ENCODE measurements at regions of chr19 and their contacts with region 1.

Region 1: DNA sequence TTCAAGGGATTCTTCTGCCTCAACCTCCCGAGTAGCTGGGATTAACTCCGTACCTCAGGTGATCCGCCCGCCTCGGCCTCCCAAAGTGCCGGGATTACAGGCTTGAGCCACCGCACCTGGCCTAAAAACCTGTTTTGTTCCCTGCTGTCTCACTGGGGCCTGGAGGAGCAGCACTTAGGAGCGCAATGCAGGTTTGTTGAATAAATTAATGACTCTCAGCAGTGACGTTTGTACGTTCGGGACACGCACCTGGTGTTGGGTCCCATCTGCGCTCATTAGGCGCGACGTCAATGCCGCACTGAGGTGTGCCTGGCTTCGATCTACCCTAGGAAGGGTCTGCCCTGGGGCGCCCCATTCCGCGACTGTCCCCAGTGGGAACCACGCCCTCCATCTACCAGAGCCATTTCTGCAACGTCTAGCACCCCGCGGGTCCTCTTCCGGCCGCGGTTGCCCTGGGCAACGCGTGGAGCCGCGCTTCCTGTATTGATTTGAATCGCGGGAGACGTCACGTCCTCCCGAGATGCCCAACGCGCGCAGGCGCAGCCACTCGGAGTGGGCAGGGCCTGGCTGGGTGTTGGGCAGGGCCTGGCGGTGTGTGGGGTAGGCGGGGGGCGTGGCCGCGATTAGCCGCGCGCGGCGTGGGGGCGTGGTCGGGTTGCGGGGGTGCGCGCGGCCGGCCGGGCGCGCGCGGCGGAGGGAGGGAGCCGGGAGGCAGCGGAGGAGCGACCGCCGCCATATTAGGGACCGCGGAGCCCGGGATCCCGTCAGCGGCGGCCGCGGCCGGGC is at the start of gene FZR1:
- DNase-seq: peak; percentile 98 to 100 (median 100)
- ATAC-seq: peak; percentile 96
- H3K4me3 ChIP-seq: peak within 1 kb of the TSS; percentile 97
- H3K4me3 Mint-ChIP-seq: peak within 1 kb of the TSS; percentile 88 to 98 (median 92)
- H3K27ac ChIP-seq: peak within 1 kb of the TSS; percentile 95
- H3K27ac Mint-ChIP-seq: peak within 1 kb of the TSS; percentile 91 to 98 (median 96)
- H3K4me1 ChIP-seq: peaks cover 14 to 23% of the 10 kb centered on the region in 2 donors
- H3K4me1 Mint-ChIP-seq: peaks cover 29 to 57% (median 44%) of the 10 kb centered on the region in 7 donors
- H3K27me3 ChIP-seq: no peaks in the 10 kb centered on the region
- H3K27me3 Mint-ChIP-seq: peaks cover 0 to 3% (median 0%) of the 10 kb centered on the region in 5 donors
- total RNA-seq, gene FZR1: 60.7 to 90.7 (median 71.3) TPM

Region 2: DNA sequence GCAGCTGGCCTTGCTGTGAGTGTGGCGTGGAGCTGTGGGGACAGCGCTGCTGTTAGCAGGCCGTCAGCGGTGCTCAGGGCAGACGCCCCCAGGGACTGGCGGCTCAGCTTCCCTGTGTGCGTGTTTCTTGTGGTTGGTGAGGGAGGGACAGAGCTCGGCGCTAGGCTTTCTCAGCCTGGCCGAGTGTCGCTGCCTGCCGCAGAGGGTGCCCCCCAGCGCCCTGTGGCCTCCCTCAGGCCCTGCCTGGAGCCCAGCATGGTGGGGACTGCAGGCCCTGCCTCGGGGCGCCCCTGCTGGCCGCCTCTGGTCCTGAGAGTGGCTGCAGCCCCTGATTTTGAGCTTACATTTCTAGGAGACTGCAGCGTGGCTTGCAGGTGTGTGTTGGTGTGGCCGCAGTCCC is 1306.6 kb before region 1 on chr19:
- CTCF ChIA-PET with region 1: no interaction called
- POLR2A ChIA-PET with region 1: no interaction called
- intact Hi-C with region 1: no loop called
- DNase-seq: no peak
- ATAC-seq: no peak
- H3K4me3 ChIP-seq: no peak overlapping the region
- H3K4me3 Mint-ChIP-seq: no peak overlapping the region
- H3K27ac ChIP-seq: no peak overlapping the region
- H3K27ac Mint-ChIP-seq: peak overlapping the region in 2 of 9 donors; percentile 19 to 48
- H3K4me1 ChIP-seq: no peaks in the 10 kb centered on the region
- H3K4me1 Mint-ChIP-seq: peaks cover 0 to 15% (median 4%) of the 10 kb centered on the region in 7 donors
- H3K27me3 ChIP-seq: no peaks in the 10 kb centered on the region
- H3K27me3 Mint-ChIP-seq: no peaks in the 10 kb centered on the region

Region 3: DNA sequence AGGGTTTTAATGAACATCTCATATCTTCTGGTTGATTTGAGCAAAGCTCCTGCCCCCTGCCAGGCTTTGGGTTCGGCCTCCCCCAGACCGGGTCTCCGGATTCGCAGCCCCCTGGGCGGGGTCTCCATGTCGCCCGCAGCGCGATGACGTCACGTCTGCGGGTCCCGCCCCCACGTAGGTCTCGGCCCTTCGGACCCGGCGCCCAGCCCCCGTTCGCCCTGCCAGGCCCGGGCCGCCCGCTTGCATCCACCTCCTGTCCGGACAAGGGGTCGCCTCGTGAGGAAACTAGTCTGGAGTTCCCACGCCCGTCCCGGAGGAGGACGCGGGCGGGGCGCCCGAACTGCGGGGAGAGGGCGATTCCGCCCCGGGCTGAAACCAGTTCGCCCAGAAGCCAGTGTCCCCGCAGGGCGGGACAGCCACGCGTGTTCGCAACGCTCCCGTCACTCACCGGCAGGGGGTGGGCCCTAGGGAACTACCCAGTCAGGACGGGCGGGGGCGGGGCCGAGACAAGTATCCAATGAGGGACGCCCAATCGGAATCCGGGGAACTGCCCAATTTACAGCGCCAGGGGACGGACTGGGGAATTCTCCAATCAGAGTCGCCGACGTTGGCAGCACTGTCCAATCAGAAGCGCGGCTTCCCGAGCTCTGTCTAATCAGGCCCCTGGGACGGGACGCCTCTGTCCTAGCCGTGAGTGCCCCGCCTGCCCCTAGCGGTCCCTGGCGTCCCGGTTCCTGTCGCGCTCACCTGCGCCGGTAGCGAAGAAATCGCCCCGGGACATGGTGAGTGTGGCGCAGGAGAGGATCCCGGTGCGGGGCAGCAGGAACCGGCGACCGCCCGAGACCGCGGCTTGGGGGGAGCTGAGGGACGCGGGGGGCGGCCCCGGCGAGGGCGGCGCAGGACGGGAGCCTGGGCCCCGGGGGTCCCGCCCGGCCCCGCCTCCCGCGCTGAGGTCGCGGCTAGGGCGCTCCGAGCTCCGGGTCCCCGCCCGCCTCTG is 664.7 kb before region 1 on chr19 and contains the start of gene ZNF555:
- CTCF ChIA-PET with region 1: no interaction called
- POLR2A ChIA-PET with region 1: no interaction called
- intact Hi-C with region 1: loop called in 1 of 2 experiments (anchors 1 kb)
- DNase-seq: peak; percentile 77 to 99 (median 97)
- ATAC-seq: peak; percentile 98
- H3K4me3 ChIP-seq: peak within 1 kb of the TSS; percentile 94
- H3K4me3 Mint-ChIP-seq: peak within 1 kb of the TSS; percentile 85 to 96 (median 92)
- H3K27ac ChIP-seq: peak within 1 kb of the TSS; percentile 75
- H3K27ac Mint-ChIP-seq: peak within 1 kb of the TSS; percentile 70 to 90 (median 82)
- H3K4me1 ChIP-seq: peaks cover 3 to 13% of the 10 kb centered on the region in 2 donors
- H3K4me1 Mint-ChIP-seq: peaks cover 5 to 33% (median 18%) of the 10 kb centered on the region in 7 donors
- H3K27me3 ChIP-seq: no peaks in the 10 kb centered on the region
- H3K27me3 Mint-ChIP-seq: peaks cover 0 to 7% (median 0%) of the 10 kb centered on the region in 5 donors
- total RNA-seq, gene ZNF555: 1.2 to 10.0 (median 2.7) TPM

Region 4: DNA sequence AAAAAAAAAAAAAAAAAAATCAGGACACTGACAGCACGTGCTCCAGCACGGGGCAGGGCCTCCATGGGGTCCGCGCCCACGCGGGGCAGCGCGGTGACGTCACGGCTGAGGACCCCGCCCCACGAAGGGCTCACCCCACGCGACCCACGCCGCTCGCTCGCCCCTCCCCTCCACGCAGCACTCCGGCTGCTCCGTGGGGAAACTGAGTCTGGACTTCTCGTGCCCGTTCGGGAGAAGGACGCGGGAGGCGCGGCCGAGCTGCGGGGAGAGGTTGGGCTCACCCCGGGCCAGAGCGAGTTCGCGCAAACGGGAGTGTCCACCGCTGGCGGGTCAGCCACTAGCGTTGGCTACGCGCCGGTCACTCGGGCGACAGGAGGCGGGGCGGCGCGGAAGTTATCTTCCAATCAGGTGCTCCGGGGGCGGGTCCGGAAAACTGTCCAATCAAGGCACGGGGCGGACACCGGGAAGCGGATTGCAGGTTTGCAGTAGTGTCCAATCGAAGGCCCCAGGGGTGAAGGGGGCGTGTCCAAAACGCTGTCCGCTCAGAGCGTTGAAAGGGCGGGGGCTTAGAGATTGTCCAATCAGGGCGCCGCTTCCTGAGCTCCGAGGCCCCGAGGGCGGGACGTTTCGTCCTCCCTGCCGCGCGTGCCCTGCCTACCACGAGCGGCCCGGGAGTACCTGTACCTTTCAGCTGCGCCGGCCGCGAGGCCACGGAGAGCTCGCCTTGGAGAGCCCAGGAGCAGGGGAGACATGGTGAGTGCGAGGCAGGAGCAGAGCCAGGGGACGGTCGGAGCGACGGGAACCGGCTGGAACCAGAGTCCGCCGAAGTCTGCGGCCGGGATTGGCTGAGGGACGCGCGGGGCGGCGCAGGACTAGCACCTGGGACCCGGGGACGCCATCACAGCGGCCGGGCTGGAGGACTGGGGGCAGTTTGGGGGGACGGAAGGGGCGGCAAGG is 605.2 kb before region 1 on chr19 and contains the start of gene ZNF57:
- CTCF ChIA-PET with region 1: no interaction called
- POLR2A ChIA-PET with region 1: no interaction called
- intact Hi-C with region 1: no loop called
- DNase-seq: peak; percentile 83 to 98 (median 96)
- ATAC-seq: peak; percentile 99
- H3K4me3 ChIP-seq: peak within 1 kb of the TSS; percentile 79
- H3K4me3 Mint-ChIP-seq: peak within 1 kb of the TSS; percentile 88 to 99 (median 96)
- H3K27ac ChIP-seq: peak within 1 kb of the TSS; percentile 63
- H3K27ac Mint-ChIP-seq: peak within 1 kb of the TSS; percentile 55 to 91 (median 85)
- H3K4me1 ChIP-seq: peaks cover 0 to 4% of the 10 kb centered on the region in 2 donors
- H3K4me1 Mint-ChIP-seq: peaks cover 11 to 28% (median 21%) of the 10 kb centered on the region in 7 donors
- H3K27me3 ChIP-seq: no peaks in the 10 kb centered on the region
- H3K27me3 Mint-ChIP-seq: no peaks in the 10 kb centered on the region
- total RNA-seq, gene ZNF57: 1.7 to 5.0 (median 2.2) TPM

Region 5: GRCh38 chr19:3035542-3036118 is 470.2 kb before region 1 on chr19:
- CTCF ChIA-PET with region 1: no interaction called
- POLR2A ChIA-PET with region 1: no interaction called
- intact Hi-C with region 1: loop called in 1 of 2 experiments (anchors 1 kb)
- DNase-seq: peak; percentile 77 to 97 (median 95)
- ATAC-seq: peak; percentile 95
- H3K4me3 ChIP-seq: peak overlapping the region; percentile 95
- H3K4me3 Mint-ChIP-seq: peak overlapping the region; percentile 88 to 97 (median 94)
- H3K27ac ChIP-seq: peak overlapping the region; percentile 76
- H3K27ac Mint-ChIP-seq: peak overlapping the region; percentile 92 to 99 (median 98)
- H3K4me1 ChIP-seq: peaks cover 11 to 16% of the 10 kb centered on the region in 2 donors
- H3K4me1 Mint-ChIP-seq: peaks cover 21 to 44% (median 31%) of the 10 kb centered on the region in 7 donors
- H3K27me3 ChIP-seq: no peaks in the 10 kb centered on the region
- H3K27me3 Mint-ChIP-seq: peaks cover 0 to 41% (median 0%) of the 10 kb centered on the region in 5 donors

Region 6: GRCh38 chr19:3360421-3361383 is 145.1 kb before region 1 on chr19:
- CTCF ChIA-PET with region 1: no interaction called
- POLR2A ChIA-PET with region 1: no interaction called
- intact Hi-C with region 1: loop called in 1 of 2 experiments (anchors 1 kb)
- DNase-seq: peak; percentile 60 to 80 (median 71)
- ATAC-seq: peak; percentile 70
- H3K4me3 ChIP-seq: peak overlapping the region; percentile 62
- H3K4me3 Mint-ChIP-seq: peak overlapping the region; percentile 85 to 97 (median 90)
- H3K27ac ChIP-seq: peak overlapping the region; percentile 69
- H3K27ac Mint-ChIP-seq: peak overlapping the region; percentile 54 to 91 (median 84)
- H3K4me1 ChIP-seq: peaks cover 16 to 18% of the 10 kb centered on the region in 2 donors
- H3K4me1 Mint-ChIP-seq: peaks cover 25 to 49% (median 41%) of the 10 kb centered on the region in 7 donors
- H3K27me3 ChIP-seq: no peaks in the 10 kb centered on the region
- H3K27me3 Mint-ChIP-seq: peaks cover 0 to 67% (median 0%) of the 10 kb centered on the region in 5 donors

Region 7: GRCh38 chr19:3387645-3388589 is 117.9 kb before region 1 on chr19:
- CTCF ChIA-PET with region 1: no interaction called
- POLR2A ChIA-PET with region 1: no interaction called
- intact Hi-C with region 1: no loop called
- DNase-seq: no peak
- ATAC-seq: no peak
- H3K4me3 ChIP-seq: no peak overlapping the region
- H3K4me3 Mint-ChIP-seq: no peak overlapping the region
- H3K27ac ChIP-seq: no peak overlapping the region
- H3K27ac Mint-ChIP-seq: no peak overlapping the region
- H3K4me1 ChIP-seq: no peaks in the 10 kb centered on the region
- H3K4me1 Mint-ChIP-seq: peaks cover 2 to 14% (median 4%) of the 10 kb centered on the region in 7 donors
- H3K27me3 ChIP-seq: no peaks in the 10 kb centered on the region
- H3K27me3 Mint-ChIP-seq: no peaks in the 10 kb centered on the region

Region 8: GRCh38 chr19:3434712-3435553 is 70.9 kb before region 1 on chr19:
- CTCF ChIA-PET with region 1: no interaction called
- POLR2A ChIA-PET with region 1: no interaction called
- intact Hi-C with region 1: loop called (anchors 1 kb)
- DNase-seq: peak; percentile 91 to 97 (median 96)
- ATAC-seq: peak; percentile 99
- H3K4me3 ChIP-seq: peak overlapping the region; percentile 70
- H3K4me3 Mint-ChIP-seq: peak overlapping the region; percentile 87 to 100 (median 96)
- H3K27ac ChIP-seq: peak overlapping the region; percentile 86
- H3K27ac Mint-ChIP-seq: peak overlapping the region; percentile 95 to 99 (median 98)
- H3K4me1 ChIP-seq: peaks cover 9 to 11% of the 10 kb centered on the region in 2 donors
- H3K4me1 Mint-ChIP-seq: peaks cover 7 to 18% (median 14%) of the 10 kb centered on the region in 7 donors
- H3K27me3 ChIP-seq: no peaks in the 10 kb centered on the region
- H3K27me3 Mint-ChIP-seq: no peaks in the 10 kb centered on the region

Region 9: GRCh38 chr19:3557461-3558248 is 51.9 kb after region 1 on chr19 and contains the start of gene MFSD12:
- CTCF ChIA-PET with region 1: interaction called, 3 read pairs
- POLR2A ChIA-PET with region 1: interaction called, 7 read pairs
- intact Hi-C with region 1: loop called (anchors 1 kb)
- DNase-seq: peak; percentile 88 to 98 (median 93)
- ATAC-seq: peak; percentile 94
- H3K4me3 ChIP-seq: peak within 1 kb of the TSS; percentile 90
- H3K4me3 Mint-ChIP-seq: peak within 1 kb of the TSS; percentile 92 to 100 (median 96)
- H3K27ac ChIP-seq: peak within 1 kb of the TSS; percentile 83
- H3K27ac Mint-ChIP-seq: peak within 1 kb of the TSS; percentile 92 to 97 (median 95)
- H3K4me1 ChIP-seq: peaks cover 25 to 30% of the 10 kb centered on the region in 2 donors
- H3K4me1 Mint-ChIP-seq: peaks cover 18 to 40% (median 38%) of the 10 kb centered on the region in 7 donors
- H3K27me3 ChIP-seq: no peaks in the 10 kb centered on the region
- H3K27me3 Mint-ChIP-seq: no peaks in the 10 kb centered on the region
- total RNA-seq, gene MFSD12: 95.2 to 153 (median 101) TPM

Region 10: DNA sequence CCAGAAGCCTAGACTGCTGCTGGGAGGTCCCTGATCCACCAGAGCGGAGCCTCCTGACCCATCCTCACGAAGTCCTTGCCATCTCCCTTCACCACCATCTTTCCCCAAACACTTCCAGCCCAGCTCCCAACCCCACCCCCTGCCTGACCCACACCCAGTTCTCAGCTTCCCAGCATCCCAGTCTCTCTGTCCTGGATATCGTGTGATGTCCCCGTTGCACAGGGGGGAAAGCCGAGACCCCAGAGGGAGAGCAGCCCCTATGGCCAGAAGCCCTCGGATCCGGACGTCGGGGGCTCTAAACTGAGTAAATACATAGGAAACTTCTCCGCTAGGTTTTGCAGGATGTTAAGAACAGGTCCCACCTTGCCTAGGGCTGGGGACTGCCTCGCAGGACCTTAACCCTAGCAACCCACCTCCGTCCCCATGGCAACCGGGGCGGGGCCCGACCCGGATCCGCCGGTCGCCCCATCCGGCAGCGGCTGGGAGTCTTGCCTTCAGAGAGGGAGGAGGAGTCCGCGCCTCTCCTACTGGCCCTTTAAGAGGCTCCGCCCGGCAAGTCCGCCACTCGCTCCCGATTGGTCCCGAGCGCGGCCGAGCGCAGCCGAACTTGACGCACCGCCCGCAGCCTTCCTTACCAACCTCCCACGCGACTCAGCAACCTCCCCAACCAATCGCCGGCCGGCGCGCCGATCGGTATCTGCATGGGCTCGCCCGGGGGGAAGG is 66.5 kb after region 1 on chr19:
- CTCF ChIA-PET with region 1: no interaction called
- POLR2A ChIA-PET with region 1: interaction called, 3 read pairs
- intact Hi-C with region 1: loop called (anchors 1 kb)
- DNase-seq: peak; percentile 94 to 99 (median 98)
- ATAC-seq: peak; percentile 96
- H3K4me3 ChIP-seq: peak overlapping the region; percentile 75
- H3K4me3 Mint-ChIP-seq: peak overlapping the region; percentile 72 to 91 (median 82)
- H3K27ac ChIP-seq: peak overlapping the region; percentile 62
- H3K27ac Mint-ChIP-seq: peak overlapping the region in 8 of 9 donors; percentile 30 to 84 (median 61)
- H3K4me1 ChIP-seq: peaks cover 12 to 13% of the 10 kb centered on the region in 2 donors
- H3K4me1 Mint-ChIP-seq: peaks cover 11 to 29% (median 14%) of the 10 kb centered on the region in 7 donors
- H3K27me3 ChIP-seq: no peaks in the 10 kb centered on the region
- H3K27me3 Mint-ChIP-seq: no peaks in the 10 kb centered on the region

Region 11: DNA sequence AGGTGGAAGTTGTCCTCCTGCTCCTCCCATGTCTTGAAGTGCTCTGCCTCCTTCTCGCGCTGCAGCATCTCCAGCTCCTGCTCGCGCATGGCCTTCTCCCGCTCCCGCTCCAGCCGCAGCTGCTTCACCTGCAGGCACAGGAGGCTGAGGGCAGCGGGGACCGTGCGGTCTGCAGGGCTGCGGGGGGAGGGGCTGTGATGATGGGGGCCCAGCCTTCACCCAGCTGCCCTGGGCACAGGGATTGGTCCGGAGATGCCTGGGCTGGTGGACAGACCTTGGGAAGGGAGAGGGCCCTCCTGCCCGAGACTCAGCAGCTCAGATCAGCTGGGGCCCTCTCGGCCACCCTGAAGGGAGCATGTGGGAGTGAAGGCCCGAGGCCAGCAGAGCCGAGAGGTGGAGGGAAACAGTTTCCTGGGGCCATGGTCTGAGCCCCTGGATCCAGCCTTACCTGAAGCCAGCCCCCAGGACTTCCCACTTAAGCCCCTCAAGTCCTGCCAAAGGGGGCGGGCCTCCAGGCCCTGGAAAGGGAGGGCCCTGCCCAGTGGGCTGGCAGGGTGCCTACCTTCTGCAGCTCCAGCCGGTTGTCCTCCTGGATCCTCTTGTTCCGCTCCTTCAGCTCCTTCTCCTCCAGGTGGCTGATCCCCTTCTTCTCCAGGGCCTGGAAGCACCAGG is 114.5 kb after region 1 on chr19:
- CTCF ChIA-PET with region 1: no interaction called
- POLR2A ChIA-PET with region 1: no interaction called
- intact Hi-C with region 1: no loop called
- DNase-seq: no peak
- ATAC-seq: no peak
- H3K4me3 ChIP-seq: no peak overlapping the region
- H3K4me3 Mint-ChIP-seq: no peak overlapping the region
- H3K27ac ChIP-seq: no peak overlapping the region
- H3K27ac Mint-ChIP-seq: no peak overlapping the region
- H3K4me1 ChIP-seq: peaks cover 3 to 13% of the 10 kb centered on the region in 2 donors
- H3K4me1 Mint-ChIP-seq: peaks cover 7 to 36% (median 27%) of the 10 kb centered on the region in 7 donors
- H3K27me3 ChIP-seq: no peaks in the 10 kb centered on the region
- H3K27me3 Mint-ChIP-seq: no peaks in the 10 kb centered on the region

Measured in naive thymus-derived CD4-positive, alpha-beta T cell (primary cell).